Lower leg skin (tissue), 4 donors: ENCODE measurements at regions of chr9 and their contacts with region 1.

Region 1: GRCh38 chr9:121213136-121213806 is 11.6 kb upstream of the RAB14 start:
- DNase-seq: peak; percentile 91 to 98
- H3K4me3 ChIP-seq: no peak overlapping the region
- CTCF ChIP-seq: peak in 1 of 3 donors; percentile 92
- POLR2A ChIP-seq: no peak

Region 2: GRCh38 chr9:120284791-120285190 is 928.5 kb before region 1 on chr9:
- intact Hi-C with region 1: no loop called
- DNase-seq: no peak
- H3K4me3 ChIP-seq: no peak overlapping the region
- CTCF ChIP-seq: no peak
- POLR2A ChIP-seq: no peak

Region 3: DNA sequence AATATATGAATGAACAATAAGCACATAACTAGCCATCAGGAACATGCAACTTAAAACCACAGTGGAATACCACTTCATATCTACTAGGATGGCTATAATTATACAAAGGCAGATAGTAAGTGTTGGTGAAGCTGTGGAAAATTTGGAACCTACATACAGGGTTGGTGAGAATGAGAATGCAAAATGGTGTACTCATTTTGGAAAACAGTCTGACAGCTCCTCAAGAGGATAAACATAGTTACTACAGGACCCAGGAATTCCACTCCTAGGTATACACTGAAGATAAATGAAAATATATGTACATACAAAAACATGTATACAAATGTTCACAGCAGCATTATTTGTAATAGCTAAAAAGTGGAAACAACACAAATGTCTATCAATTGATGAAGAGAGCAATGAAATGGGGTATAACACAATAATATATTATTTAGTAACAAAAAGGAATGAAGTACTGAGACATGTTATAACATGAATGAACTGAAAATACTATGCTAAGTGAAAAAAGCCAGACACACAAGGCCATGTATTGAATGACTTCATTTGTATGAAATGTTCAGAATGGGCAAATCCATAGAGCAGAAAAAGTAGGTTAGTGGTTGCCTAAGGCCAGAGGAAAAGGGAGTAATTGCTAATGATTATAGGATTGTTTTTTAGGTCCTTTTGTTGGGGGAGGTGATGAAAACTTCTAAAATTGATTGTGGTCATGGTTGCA is 602.1 kb before region 1 on chr9:
- intact Hi-C with region 1: no loop called
- DNase-seq: no peak
- H3K4me3 ChIP-seq: no peak overlapping the region
- CTCF ChIP-seq: no peak
- POLR2A ChIP-seq: no peak

Region 4: GRCh38 chr9:121317742-121318489 is 104.6 kb after region 1 on chr9:
- intact Hi-C with region 1: loop called (anchors 10 kb)
- DNase-seq: peak in 1 of 2 donors; percentile 84
- H3K4me3 ChIP-seq: no peak overlapping the region
- CTCF ChIP-seq: no peak
- POLR2A ChIP-seq: no peak

Region 5: GRCh38 chr9:121399883-121400607 is 186.8 kb after region 1 on chr9:
- intact Hi-C with region 1: loop called (anchors 5 kb)
- DNase-seq: no peak
- H3K4me3 ChIP-seq: no peak overlapping the region
- CTCF ChIP-seq: peak in 1 of 3 donors; percentile 33
- POLR2A ChIP-seq: no peak